ENCODE measurements at regions of chr6 and their contacts with region 1.

Region 1: GRCh38 chr6:130381459-130382380 is 15.9 kb downstream of the TMEM200A start:
- DNase-seq: peak in 7 of 9 donors; percentile 19 to 67 (median 48)
- ATAC-seq: peak; percentile 93
- H3K4me3 ChIP-seq: no peak overlapping the region
- H3K4me3 Mint-ChIP-seq: peak overlapping the region in 5 of 10 donors; percentile 0 to 46 (median 11)
- H3K27ac ChIP-seq: no peak overlapping the region
- H3K27ac Mint-ChIP-seq: peak overlapping the region in 1 of 9 donors; percentile 53
- H3K4me1 ChIP-seq: peaks cover 11 to 14% of the 10 kb centered on the region in 2 donors
- H3K4me1 Mint-ChIP-seq: peaks cover 14 to 27% (median 17%) of the 10 kb centered on the region in 7 donors
- H3K27me3 ChIP-seq: no peaks in the 10 kb centered on the region
- H3K27me3 Mint-ChIP-seq: peaks cover 0 to 16% (median 0%) of the 10 kb centered on the region in 5 donors

Region 2: DNA sequence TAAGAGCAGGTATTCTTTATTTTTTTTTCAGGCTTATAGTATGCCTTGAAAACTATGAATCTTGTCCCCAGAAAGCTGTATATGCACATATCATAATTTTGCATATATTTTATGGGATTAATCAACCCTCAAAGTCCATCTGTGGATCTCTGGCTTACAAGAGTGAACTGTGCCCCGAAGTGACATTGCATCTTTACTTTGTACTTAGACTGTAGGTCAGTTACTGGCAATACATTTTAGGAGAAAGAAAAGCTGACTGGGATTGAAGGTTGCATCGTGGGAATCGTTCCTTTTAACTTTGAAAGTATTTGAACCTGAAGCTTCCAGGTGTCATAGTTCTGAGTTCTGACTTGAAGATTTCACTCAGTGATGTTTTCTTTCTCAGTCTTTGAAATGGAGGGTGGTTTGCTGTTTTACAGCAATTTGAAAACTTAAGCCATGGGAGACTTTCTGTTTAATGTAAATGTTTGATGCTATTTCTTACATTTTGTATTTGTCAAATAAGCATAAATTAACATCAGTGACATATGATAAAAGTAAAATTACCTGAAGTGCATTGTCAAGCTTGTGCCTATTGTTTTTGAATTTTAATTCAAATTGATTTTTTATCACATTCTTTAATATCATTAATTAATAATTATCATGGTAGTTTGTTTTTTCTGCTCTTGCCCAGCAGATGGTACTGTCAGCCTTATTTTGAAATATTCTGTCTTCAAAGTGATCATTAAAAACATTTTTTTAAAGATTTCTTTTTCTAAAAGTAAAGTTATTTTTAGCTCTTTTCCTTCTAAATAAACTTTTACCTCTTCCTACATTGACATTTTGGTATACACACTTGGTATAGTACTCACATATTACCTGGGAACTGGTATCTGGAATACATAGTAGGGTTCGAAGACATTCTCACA is 334.4 kb before region 1 on chr6:
- CTCF ChIA-PET with region 1: interaction called, 5 read pairs
- POLR2A ChIA-PET with region 1: no interaction called
- intact Hi-C with region 1: loop called in 1 of 2 experiments (anchors 10 kb)
- DNase-seq: no peak
- ATAC-seq: no peak
- H3K4me3 ChIP-seq: no peak overlapping the region
- H3K4me3 Mint-ChIP-seq: no peak overlapping the region
- H3K27ac ChIP-seq: no peak overlapping the region
- H3K27ac Mint-ChIP-seq: peak overlapping the region in 2 of 9 donors; percentile 12 to 24
- H3K4me1 ChIP-seq: no peaks in the 10 kb centered on the region
- H3K4me1 Mint-ChIP-seq: peaks cover 9 to 27% (median 15%) of the 10 kb centered on the region in 7 donors
- H3K27me3 ChIP-seq: no peaks in the 10 kb centered on the region
- H3K27me3 Mint-ChIP-seq: no peaks in the 10 kb centered on the region

Region 3: GRCh38 chr6:130076512-130076911 is 305.2 kb before region 1 on chr6:
- CTCF ChIA-PET with region 1: no interaction called
- POLR2A ChIA-PET with region 1: no interaction called
- intact Hi-C with region 1: loop called in 1 of 2 experiments (anchors 10 kb)
- DNase-seq: peak in 5 of 9 donors; percentile 7 to 36 (median 27)
- ATAC-seq: no peak
- H3K4me3 ChIP-seq: no peak overlapping the region
- H3K4me3 Mint-ChIP-seq: peak overlapping the region in 1 of 10 donors; percentile 37
- H3K27ac ChIP-seq: no peak overlapping the region
- H3K27ac Mint-ChIP-seq: no peak overlapping the region
- H3K4me1 ChIP-seq: no peaks in the 10 kb centered on the region
- H3K4me1 Mint-ChIP-seq: peaks cover 12 to 31% (median 23%) of the 10 kb centered on the region in 7 donors
- H3K27me3 ChIP-seq: no peaks in the 10 kb centered on the region
- H3K27me3 Mint-ChIP-seq: no peaks in the 10 kb centered on the region

Region 4: DNA sequence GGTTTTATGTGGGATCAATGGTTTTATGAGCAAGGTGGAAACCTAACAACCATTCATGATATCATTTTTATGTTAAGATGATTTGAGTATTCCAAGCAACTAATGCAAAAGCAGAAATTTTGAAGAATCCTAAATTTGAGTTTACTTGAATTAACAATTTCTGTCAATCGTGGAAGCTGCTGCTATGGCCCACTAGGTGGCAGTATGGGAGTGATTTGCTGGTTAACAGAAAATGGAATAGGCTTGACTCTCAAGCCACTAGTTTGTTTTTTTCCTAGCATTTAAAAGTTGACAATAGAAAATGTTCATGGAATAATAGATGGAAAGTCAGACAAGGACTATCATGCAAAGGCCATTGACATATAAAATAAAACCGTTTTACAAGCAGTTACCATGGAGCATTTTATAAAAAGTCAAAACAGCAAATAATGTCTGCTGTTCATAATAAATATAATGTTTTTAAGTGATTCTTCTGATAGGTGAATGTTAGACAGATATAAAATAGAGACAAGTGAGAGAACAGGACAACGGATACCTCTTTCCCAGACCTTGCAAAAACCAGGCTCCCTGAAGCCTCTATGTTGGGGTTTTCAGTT is 58.9 kb before region 1 on chr6:
- CTCF ChIA-PET with region 1: interaction called, 3 read pairs
- POLR2A ChIA-PET with region 1: no interaction called
- intact Hi-C with region 1: loop called (anchors 1 to 2 kb)
- DNase-seq: peak in 8 of 9 donors; percentile 30 to 61 (median 56)
- ATAC-seq: peak; percentile 61
- H3K4me3 ChIP-seq: no peak overlapping the region
- H3K4me3 Mint-ChIP-seq: no peak overlapping the region
- H3K27ac ChIP-seq: no peak overlapping the region
- H3K27ac Mint-ChIP-seq: no peak overlapping the region
- H3K4me1 ChIP-seq: no peaks in the 10 kb centered on the region
- H3K4me1 Mint-ChIP-seq: peaks cover 0 to 16% (median 5%) of the 10 kb centered on the region in 7 donors
- H3K27me3 ChIP-seq: no peaks in the 10 kb centered on the region
- H3K27me3 Mint-ChIP-seq: peaks cover 0 to 33% (median 0%) of the 10 kb centered on the region in 5 donors

Region 5: GRCh38 chr6:130365166-130366106 is 16.3 kb before region 1 on chr6 and contains the start of gene TMEM200A:
- CTCF ChIA-PET with region 1: interaction called, 4 read pairs
- POLR2A ChIA-PET with region 1: no interaction called
- intact Hi-C with region 1: loop called (anchors 1 kb)
- DNase-seq: peak in 6 of 9 donors; percentile 7 to 63 (median 21)
- ATAC-seq: peak; percentile 64
- H3K4me3 ChIP-seq: peak within 1 kb of the TSS; percentile 68
- H3K4me3 Mint-ChIP-seq: peak within 1 kb of the TSS; percentile 66 to 90 (median 83)
- H3K27ac ChIP-seq: no peak within 1 kb of the TSS
- H3K27ac Mint-ChIP-seq: peak within 1 kb of the TSS in 2 of 9 donors; percentile 55 to 64
- H3K4me1 ChIP-seq: peaks cover 4 to 5% of the 10 kb centered on the region in 2 donors
- H3K4me1 Mint-ChIP-seq: peaks cover 7 to 26% (median 17%) of the 10 kb centered on the region in 7 donors
- H3K27me3 ChIP-seq: no peaks in the 10 kb centered on the region
- H3K27me3 Mint-ChIP-seq: peaks cover 7 to 64% (median 38%) of the 10 kb centered on the region in 5 donors
- total RNA-seq, gene TMEM200A: 0.19 to 7.2 (median 0.99) TPM in 4 of 5 experiments, not detected in the other

Region 6: DNA sequence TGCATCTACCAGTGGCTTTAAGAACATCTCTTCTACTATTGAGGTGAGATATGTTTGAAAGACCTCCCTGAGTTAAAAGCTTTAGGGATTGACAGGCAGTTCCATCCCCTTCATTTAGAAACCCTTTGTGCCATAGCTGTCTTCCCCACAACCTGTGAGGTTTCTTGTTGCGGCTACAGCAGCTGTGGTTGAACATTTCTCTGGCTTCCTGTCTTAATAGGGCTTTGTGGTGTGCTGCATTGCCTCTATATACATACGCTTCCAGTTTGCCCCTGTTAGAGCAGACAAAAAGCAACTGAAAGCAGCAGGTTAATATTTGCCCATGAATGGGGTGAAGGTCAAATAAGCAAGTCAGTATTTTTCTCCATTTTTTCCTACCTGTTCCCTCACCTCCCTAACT is 194.3 kb after region 1 on chr6:
- CTCF ChIA-PET with region 1: no interaction called
- POLR2A ChIA-PET with region 1: no interaction called
- intact Hi-C with region 1: loop called in 1 of 2 experiments (anchors 5 kb)
- DNase-seq: peak; percentile 5 to 82 (median 72)
- ATAC-seq: peak; percentile 94
- H3K4me3 ChIP-seq: peak overlapping the region; percentile 31
- H3K4me3 Mint-ChIP-seq: peak overlapping the region; percentile 35 to 82 (median 73)
- H3K27ac ChIP-seq: peak overlapping the region; percentile 8
- H3K27ac Mint-ChIP-seq: peak overlapping the region; percentile 29 to 91 (median 67)
- H3K4me1 ChIP-seq: peaks cover 25 to 39% of the 10 kb centered on the region in 2 donors
- H3K4me1 Mint-ChIP-seq: peaks cover 32 to 62% (median 48%) of the 10 kb centered on the region in 7 donors
- H3K27me3 ChIP-seq: no peaks in the 10 kb centered on the region
- H3K27me3 Mint-ChIP-seq: peaks cover 0 to 4% (median 0%) of the 10 kb centered on the region in 5 donors

Measured in naive thymus-derived CD4-positive, alpha-beta T cell (primary cell).